GM12878 (cell line): ENCODE measurements at regions of chr3 and their contacts with region 1.

Region 1: GRCh38 chr3:22887664-22888291 is 315.3 kb upstream of the UBE2E2 start:
- DNase-seq: no peak
- ATAC-seq: peak; percentile 73; the same call in 2 of the 3 replicates
- H3K4me3 ChIP-seq: no peak overlapping the region
- H3K27ac ChIP-seq: no peak overlapping the region
- H3K4me1 ChIP-seq: no peaks in the 10 kb centered on the region
- H3K27me3 ChIP-seq: no peaks in the 10 kb centered on the region
- CTCF ChIP-seq: peak; percentile 49 to 56 (median 55); a peak in 4 of 6 replicates
- EP300 ChIP-seq: no peak
- POLR2A ChIP-seq: no peak
- RAD21 ChIP-seq: peak; percentile 43

Region 2: DNA sequence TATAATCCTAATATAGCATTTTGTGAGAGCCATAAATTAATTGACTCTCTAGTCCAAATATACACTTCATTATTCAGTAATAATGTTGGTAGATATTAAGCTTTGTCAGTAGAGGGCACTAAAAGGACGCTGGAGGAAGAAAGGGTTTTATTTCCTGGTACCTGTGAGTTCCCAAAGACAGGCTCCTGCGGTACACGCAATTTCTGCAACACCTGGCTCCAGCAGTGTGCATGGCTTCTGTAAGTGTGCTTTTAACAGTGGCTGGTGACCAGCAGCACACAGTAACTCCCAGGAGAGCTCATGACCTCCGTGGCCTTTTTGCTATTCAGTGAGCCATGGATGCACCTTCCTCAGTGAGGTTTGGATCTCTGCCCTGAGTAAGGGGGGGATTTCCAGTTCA is 798.5 kb before region 1 on chr3:
- CTCF ChIA-PET with region 1: interaction called, 4 read pairs
- POLR2A ChIA-PET with region 1: no interaction called
- RAD21 ChIA-PET with region 1: no interaction called
- SMC1A ChIA-PET with region 1: no interaction called
- in situ Hi-C with region 1: no loop called
- intact Hi-C with region 1: loop called (anchors 5 kb)
- DNase-seq: peak; percentile 34
- ATAC-seq: peak; percentile 88
- H3K4me3 ChIP-seq: no peak overlapping the region
- H3K27ac ChIP-seq: no peak overlapping the region
- H3K4me1 ChIP-seq: no peaks in the 10 kb centered on the region
- H3K27me3 ChIP-seq: no peaks in the 10 kb centered on the region
- CTCF ChIP-seq: peak; percentile 39 to 63 (median 47); a peak in 4 of 6 replicates
- EP300 ChIP-seq: no peak
- POLR2A ChIP-seq: no peak
- RAD21 ChIP-seq: peak; percentile 61

Region 3: GRCh38 chr3:22565393-22565792 is 322.4 kb before region 1 on chr3:
- CTCF ChIA-PET with region 1: interaction called, 5 read pairs
- POLR2A ChIA-PET with region 1: no interaction called
- RAD21 ChIA-PET with region 1: no interaction called
- SMC1A ChIA-PET with region 1: interaction called, 5 read pairs
- in situ Hi-C with region 1: no loop called
- intact Hi-C with region 1: loop called (anchors 1 kb)
- DNase-seq: no peak
- ATAC-seq: no peak
- H3K4me3 ChIP-seq: no peak overlapping the region
- H3K27ac ChIP-seq: no peak overlapping the region
- H3K4me1 ChIP-seq: no peaks in the 10 kb centered on the region
- H3K27me3 ChIP-seq: no peaks in the 10 kb centered on the region
- CTCF ChIP-seq: no peak
- EP300 ChIP-seq: no peak
- POLR2A ChIP-seq: no peak
- RAD21 ChIP-seq: no peak